HEK293T (cell line): ENCODE measurements at regions of chr9 and their contacts with region 1.

Region 1: GRCh38 chr9:4748612-4749011 is 7.6 kb upstream of the AK3 start:
- DNase-seq: no peak

Region 2: GRCh38 chr9:5178126-5178805 is 429.7 kb after region 1 on chr9:
- CTCF ChIA-PET with region 1: interaction called, 11 read pairs
- POLR2A ChIA-PET with region 1: no interaction called
- DNase-seq: no peak